IMR-90 (cell line): ENCODE measurements at regions of chr12 and their contacts with region 1.

Region 1: GRCh38 chr12:77830583-77831351 is at the start of gene NAV3:
- DNase-seq: no peak
- ATAC-seq: no peak
- H3K4me3 ChIP-seq: no peak within 1 kb of the TSS
- H3K27ac ChIP-seq: no peak within 1 kb of the TSS
- H3K4me1 ChIP-seq: no peaks in the 10 kb centered on the region
- H3K27me3 ChIP-seq: peaks cover 1% of the 10 kb centered on the region; the same call in 1 of the 2 replicates
- CTCF ChIP-seq: no peak
- POLR2A ChIP-seq: no peak
- RAD21 ChIP-seq: no peak
- total RNA-seq, gene NAV3: 98.3 and 106 TPM in 2 replicates

Region 2: DNA sequence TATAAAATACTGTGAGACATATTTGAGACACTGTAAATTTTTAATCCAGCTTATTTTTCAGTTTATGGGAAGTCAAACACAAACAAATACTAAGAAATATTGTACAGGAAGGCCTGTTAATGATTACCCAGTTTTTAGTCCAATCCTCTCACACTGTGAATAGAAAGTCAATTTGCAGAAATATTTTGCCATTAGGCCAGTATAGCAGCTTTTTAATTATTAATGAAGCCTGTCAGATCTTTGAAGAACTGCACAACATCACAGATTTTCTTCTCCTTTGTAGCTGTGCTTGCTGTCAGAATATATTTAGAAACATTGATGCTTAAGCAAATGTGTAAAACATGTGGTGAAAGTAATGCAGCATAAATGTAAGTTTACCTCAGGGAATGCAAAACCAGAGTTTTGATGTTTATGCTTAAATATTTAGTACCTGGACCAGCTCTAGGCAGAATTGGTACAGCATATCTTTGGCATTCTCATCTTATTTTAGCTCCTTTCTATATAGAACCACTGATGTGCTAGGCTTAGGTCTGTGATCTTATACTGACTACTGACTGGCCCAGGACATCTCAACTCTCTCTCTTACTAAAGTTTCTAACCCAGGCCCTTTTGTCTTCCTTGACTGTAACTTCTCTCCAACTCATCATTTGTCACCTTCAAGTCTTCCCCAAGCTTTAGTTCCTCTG is 230.8 kb before region 1 on chr12:
- CTCF ChIA-PET with region 1: no interaction called
- POLR2A ChIA-PET with region 1: no interaction called
- dilution Hi-C with region 1: no loop called
- in situ Hi-C with region 1: no loop called
- intact Hi-C with region 1: loop called (anchors 5 kb)
- DNase-seq: no peak
- ATAC-seq: no peak
- H3K4me3 ChIP-seq: no peak overlapping the region
- H3K27ac ChIP-seq: no peak overlapping the region
- H3K4me1 ChIP-seq: no peaks in the 10 kb centered on the region
- H3K27me3 ChIP-seq: no peaks in the 10 kb centered on the region
- CTCF ChIP-seq: no peak
- POLR2A ChIP-seq: no peak
- RAD21 ChIP-seq: no peak